IMR-90 (cell line): ENCODE measurements at regions of chr11 and their contacts with region 1.

Region 1: DNA sequence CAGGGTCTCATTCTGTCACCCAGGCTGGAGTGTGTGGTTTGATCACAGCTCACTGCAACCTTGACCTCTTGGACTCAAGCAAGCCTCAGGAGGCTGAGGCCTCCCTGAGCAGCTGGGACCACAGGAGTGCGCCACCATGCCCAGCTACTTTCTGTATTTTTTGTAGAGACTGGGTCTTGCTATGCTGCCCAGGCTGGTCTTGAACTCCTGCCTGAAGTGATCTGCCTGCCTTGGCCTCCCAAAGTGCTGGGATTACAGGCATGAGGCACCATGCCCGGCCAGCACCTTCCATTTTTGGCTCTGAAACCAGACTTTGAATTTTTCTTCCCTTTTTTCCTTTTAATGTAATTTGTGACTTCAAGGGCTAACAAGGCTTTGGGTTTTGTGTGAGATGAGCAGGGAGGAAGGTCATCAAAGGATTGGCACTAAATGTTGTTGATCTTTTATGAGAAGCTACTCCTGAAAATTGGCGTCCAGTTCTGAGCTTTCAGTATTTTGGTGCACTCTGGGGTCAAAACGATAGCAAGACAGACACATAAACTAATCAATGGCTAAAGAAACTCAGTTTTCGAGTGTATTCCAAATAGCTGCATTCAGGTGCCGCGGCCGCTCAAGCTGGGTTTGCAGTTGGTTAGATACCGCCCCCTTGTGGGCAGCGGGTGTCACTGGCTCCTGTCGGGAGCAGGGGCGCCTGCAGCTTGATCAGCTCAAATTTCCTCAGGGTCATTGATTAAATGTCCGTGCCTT is 51.9 kb upstream of the CLMP start:
- DNase-seq: peak; percentile 81
- ATAC-seq: peak; percentile 87
- H3K4me3 ChIP-seq: no peak overlapping the region
- H3K27ac ChIP-seq: peak overlapping the region; percentile 10; the same call in 1 of the 2 replicates
- H3K4me1 ChIP-seq: peaks cover 19% of the 10 kb centered on the region
- H3K27me3 ChIP-seq: no peaks in the 10 kb centered on the region
- CTCF ChIP-seq: peak; percentile 98
- POLR2A ChIP-seq: 0 out of 2 replicates have a peak, but pooled peaks have one; percentile 42
- RAD21 ChIP-seq: peak; percentile 99

Region 2: DNA sequence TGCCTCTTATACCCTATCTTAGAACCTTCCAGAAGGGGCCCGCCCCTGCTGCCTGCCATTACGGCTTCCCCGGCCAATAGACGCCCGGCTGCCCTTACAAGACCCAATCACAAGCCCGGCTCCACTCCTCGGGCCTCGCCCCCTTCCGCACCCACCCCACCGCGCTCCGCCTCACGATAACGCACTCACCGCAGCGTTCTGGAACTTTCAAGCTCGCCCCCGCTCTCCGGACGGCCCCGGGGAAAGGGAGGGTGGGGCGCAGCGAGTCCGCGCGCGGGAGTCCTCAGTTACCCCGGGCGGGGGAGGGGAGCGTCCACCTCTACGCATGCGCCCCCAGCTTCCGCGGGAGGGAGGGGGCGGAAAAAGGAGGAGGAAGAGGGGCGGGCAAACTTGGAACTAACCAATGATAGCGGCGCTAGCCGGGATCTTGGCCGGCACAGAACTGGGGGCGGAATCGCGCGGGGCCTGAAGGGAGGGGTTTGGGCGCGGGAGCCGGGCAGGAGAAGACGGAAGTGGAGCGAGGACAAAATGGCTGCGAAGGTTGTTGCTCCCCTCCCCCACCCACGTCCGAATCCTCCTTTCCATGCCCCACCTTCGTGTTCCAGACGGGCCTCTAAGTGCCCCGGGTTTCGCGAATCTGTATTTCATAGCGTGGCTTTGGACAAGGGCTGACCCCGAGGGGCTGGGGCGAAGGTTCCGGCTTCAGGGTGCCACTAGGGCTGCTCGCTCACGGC is 184.6 kb before region 1 on chr11:
- CTCF ChIA-PET with region 1: interaction called, 3 read pairs
- POLR2A ChIA-PET with region 1: interaction called, 3 read pairs
- dilution Hi-C with region 1: no loop called
- in situ Hi-C with region 1: no loop called
- intact Hi-C with region 1: loop called (anchors 2 kb)
- DNase-seq: peak; percentile 100
- ATAC-seq: peak; percentile 85
- H3K4me3 ChIP-seq: peak overlapping the region; percentile 86
- H3K27ac ChIP-seq: peak overlapping the region; percentile 95
- H3K4me1 ChIP-seq: peaks cover 5% of the 10 kb centered on the region
- H3K27me3 ChIP-seq: no peaks in the 10 kb centered on the region
- CTCF ChIP-seq: no peak
- POLR2A ChIP-seq: no peak
- RAD21 ChIP-seq: no peak

Region 3: GRCh38 chr11:123110356-123110755 is 136.6 kb before region 1 on chr11:
- CTCF ChIA-PET with region 1: interaction called, 42 read pairs
- POLR2A ChIA-PET with region 1: no interaction called
- dilution Hi-C with region 1: loop called (anchors 25 kb)
- in situ Hi-C with region 1: loop called (anchors 5 kb)
- intact Hi-C with region 1: loop called (anchors 1 kb)
- DNase-seq: no peak
- ATAC-seq: no peak
- H3K4me3 ChIP-seq: no peak overlapping the region
- H3K27ac ChIP-seq: no peak overlapping the region
- H3K4me1 ChIP-seq: peaks cover 13% of the 10 kb centered on the region
- H3K27me3 ChIP-seq: no peaks in the 10 kb centered on the region
- CTCF ChIP-seq: no peak
- POLR2A ChIP-seq: no peak
- RAD21 ChIP-seq: no peak

Region 4: DNA sequence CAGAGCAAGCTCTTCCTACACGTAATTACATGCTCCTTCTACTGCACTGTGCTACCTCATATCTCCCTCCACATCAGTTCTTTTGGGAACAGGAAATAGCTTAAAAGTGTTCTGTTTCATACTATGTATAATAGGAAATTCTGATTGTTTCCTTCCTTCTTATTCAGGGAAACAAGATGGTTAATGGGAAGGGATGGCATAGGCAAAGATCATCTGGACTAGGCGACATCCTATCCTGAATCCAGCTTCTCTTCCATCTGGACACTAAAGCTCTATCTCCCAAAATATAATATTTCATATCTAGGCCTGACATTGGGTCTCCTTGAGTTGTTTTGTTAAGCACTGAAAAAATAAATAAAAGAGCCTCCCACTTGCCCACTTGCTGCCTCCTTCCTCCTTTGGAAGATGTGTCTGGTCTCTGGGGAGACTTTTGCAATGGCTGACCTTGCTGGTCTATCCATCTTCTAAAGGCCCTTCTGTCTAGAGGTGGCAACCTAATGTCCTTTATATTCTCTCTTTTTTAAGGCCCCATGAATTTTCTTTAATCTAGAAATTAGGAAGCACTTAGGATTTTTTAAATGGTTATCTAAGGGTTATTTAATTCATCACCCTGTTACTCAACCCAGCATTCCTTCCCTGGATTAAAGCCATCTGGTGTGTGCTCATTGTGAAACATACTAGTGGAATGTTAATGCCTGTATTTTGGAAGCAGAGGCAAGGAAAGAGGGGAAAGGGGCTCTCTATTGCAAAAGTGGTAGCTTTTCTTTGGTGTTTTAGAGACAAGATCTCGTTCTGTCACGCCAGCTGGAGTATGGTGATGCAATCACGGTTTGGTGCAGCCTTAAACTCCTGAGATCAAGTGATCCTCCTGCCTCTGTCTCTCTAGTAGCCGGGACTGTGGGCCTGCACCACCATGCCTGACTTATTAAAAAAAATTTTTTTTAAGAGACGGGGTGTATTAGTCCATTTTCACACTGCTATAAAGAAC is 72.4 kb before region 1 on chr11:
- CTCF ChIA-PET with region 1: interaction called, 6 read pairs
- POLR2A ChIA-PET with region 1: no interaction called
- dilution Hi-C with region 1: no loop called
- in situ Hi-C with region 1: loop called (anchors 10 kb)
- intact Hi-C with region 1: no loop called
- DNase-seq: peak; percentile 99
- ATAC-seq: peak; percentile 62
- H3K4me3 ChIP-seq: no peak overlapping the region
- H3K27ac ChIP-seq: peak overlapping the region; percentile 97
- H3K4me1 ChIP-seq: peaks cover 23% of the 10 kb centered on the region
- H3K27me3 ChIP-seq: no peaks in the 10 kb centered on the region
- CTCF ChIP-seq: no peak
- POLR2A ChIP-seq: 0 out of 2 replicates have a peak, but pooled peaks have one; percentile 2
- RAD21 ChIP-seq: 0 out of 2 replicates have a peak, but pooled peaks have one; percentile 16

Region 5: DNA sequence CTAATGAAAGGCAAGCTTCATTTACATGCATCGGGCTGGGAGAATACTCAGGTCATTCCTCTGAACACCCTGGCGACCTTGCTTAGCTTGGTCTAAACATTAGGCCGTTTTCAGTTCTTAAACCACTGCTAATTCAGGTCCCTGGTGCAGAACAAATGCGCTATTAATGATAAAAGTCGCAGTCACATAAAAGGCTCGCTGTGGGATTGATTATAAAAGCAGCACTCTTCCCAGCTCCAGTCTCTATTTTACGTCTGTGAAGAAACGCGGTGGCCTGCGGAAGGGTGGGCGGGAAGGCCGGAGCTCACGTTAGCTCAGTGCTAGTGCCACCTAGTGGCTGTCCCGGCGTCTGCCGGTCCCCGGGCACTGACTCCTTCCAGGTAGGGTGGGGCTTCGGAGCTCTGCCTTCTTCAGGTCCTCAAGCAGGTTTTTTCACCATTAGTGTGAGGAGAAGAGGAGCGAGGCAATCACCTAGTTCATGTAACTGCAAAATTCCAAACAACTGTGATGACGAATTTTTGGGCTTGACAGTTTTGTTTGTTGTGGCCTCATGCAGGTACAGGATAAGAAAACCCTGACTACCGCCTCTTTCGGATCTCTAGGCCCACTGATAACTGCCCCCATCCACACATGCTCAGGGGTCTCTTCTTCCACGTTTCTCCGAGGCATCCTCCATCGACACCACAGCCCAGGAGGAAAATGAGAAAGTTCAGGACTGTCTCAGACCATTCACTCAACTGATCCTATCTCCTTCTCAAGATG is 14.6 kb after region 1 on chr11:
- CTCF ChIA-PET with region 1: interaction called, 20 read pairs
- POLR2A ChIA-PET with region 1: no interaction called
- dilution Hi-C with region 1: no loop called
- in situ Hi-C with region 1: no loop called
- intact Hi-C with region 1: no loop called
- DNase-seq: peak; percentile 67
- ATAC-seq: peak; percentile 98
- H3K4me3 ChIP-seq: peak overlapping the region; percentile 31; the same call in 1 of the 2 replicates
- H3K27ac ChIP-seq: no peak overlapping the region
- H3K4me1 ChIP-seq: peaks cover 3% of the 10 kb centered on the region; the same call in 1 of the 2 replicates
- H3K27me3 ChIP-seq: peaks cover 7% of the 10 kb centered on the region; the same call in 1 of the 2 replicates
- CTCF ChIP-seq: peak; percentile 89
- POLR2A ChIP-seq: no peak
- RAD21 ChIP-seq: peak; percentile 86